CD4-positive, alpha-beta T cell (primary cell): ENCODE measurements at regions of chr1 and their contacts with region 1.

Region 1: DNA sequence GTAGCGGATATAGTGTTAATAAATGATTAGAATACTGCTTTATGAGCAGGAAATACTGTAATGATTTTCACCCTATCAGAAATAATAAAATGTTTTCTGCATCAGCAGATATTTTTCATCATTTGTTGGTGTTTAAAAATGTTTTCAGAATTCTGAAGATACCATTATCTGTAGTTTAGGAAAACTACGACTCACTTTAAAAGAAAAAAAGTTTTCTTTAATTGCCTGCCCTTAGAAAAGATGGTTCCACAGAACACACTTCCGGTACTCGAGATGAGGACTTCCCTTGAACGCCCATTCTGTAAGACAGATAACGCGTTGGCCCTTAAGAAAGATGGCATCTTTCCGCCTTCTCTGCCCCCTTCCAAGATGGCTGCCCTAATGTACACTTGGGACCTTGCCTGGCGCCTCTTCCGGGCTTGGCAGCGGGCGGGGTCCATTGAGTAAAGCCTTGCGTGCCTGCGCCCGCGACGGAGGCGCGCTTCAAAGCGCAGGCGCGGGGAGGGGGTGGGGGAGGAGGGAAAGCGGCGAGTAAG is at the start of gene SZRD1:
- DNase-seq: peak; percentile 90 to 99 (median 94)
- ATAC-seq: peak; percentile 89
- H3K4me3 ChIP-seq: peak within 1 kb of the TSS; percentile 100
- H3K4me3 Mint-ChIP-seq: peak within 1 kb of the TSS; percentile 98
- H3K27ac ChIP-seq: peak within 1 kb of the TSS; percentile 99 to 100
- H3K27ac Mint-ChIP-seq: peak within 1 kb of the TSS; percentile 99
- H3K4me1 ChIP-seq: peaks cover 38% of the 10 kb centered on the region
- H3K4me1 Mint-ChIP-seq: peaks cover 42% of the 10 kb centered on the region
- H3K27me3 ChIP-seq: no peaks in the 10 kb centered on the region
- H3K27me3 Mint-ChIP-seq: no peaks in the 10 kb centered on the region
- CTCF ChIP-seq: no peak
- total RNA-seq, gene SZRD1: 115 to 120 TPM

Region 2: GRCh38 chr1:15975805-15976680 is 390.7 kb before region 1 on chr1 and contains the start of gene ZBTB17:
- CTCF ChIA-PET with region 1: no interaction called
- POLR2A ChIA-PET with region 1: no interaction called
- intact Hi-C with region 1: loop called in 1 of 2 experiments (anchors 2 kb)
- DNase-seq: peak; percentile 91 to 99 (median 94)
- ATAC-seq: peak; percentile 92
- H3K4me3 ChIP-seq: peak within 1 kb of the TSS; percentile 91
- H3K4me3 Mint-ChIP-seq: peak within 1 kb of the TSS; percentile 99
- H3K27ac ChIP-seq: peak within 1 kb of the TSS; percentile 67 to 70
- H3K27ac Mint-ChIP-seq: peak within 1 kb of the TSS; percentile 92
- H3K4me1 ChIP-seq: peaks cover 37% of the 10 kb centered on the region
- H3K4me1 Mint-ChIP-seq: peaks cover 34% of the 10 kb centered on the region
- H3K27me3 ChIP-seq: no peaks in the 10 kb centered on the region
- H3K27me3 Mint-ChIP-seq: no peaks in the 10 kb centered on the region
- CTCF ChIP-seq: no peak
- total RNA-seq, gene ZBTB17: 70.2 to 78.1 TPM

Region 3: DNA sequence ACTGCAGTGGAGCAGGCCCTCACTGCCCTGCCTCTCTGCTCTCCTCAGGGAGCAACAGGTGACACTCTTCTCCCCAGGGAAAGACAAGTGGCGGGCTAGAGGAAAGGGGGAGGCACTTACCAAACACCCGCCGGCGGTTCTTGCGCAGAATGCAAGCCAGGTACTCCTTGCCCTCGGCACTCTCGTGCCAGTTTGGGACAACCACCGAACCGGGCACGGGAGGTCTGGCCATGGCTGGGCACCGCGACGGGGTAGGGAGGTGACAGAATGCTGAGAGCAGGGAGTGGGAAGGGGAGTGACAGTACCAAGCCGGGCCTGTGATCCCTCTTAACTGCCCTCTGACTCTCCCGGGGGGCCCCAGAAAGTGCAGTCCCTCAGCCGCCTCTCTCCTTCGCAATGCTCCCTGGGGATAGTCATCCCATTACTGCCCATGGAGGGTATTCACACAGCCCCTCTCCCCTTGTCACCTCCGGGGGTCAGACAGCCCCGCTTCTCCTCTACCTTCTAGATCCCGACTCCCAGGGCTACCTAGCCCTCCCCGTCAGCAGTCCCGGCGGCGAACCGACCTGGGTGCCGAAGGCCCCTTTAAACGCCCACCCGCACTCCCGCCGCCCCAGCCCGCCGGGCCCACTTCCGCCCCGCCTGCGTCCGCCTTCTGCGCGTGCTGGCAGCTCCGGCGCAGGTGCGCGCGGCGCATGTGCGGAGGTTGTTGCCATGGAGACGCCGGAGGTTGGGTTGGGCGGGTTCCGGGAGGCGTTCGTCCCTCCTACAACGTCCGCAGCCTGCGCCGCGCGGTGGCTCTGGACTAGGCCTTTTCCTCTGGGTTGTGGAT is 130.1 kb before region 1 on chr1 and contains the start of gene CPLANE2:
- CTCF ChIA-PET with region 1: interaction called, 3 read pairs
- POLR2A ChIA-PET with region 1: no interaction called
- intact Hi-C with region 1: loop called (anchors 2 to 10 kb)
- DNase-seq: peak; percentile 93 to 98 (median 95)
- ATAC-seq: peak; percentile 78
- H3K4me3 ChIP-seq: peak within 1 kb of the TSS; percentile 85
- H3K4me3 Mint-ChIP-seq: peak within 1 kb of the TSS; percentile 93
- H3K27ac ChIP-seq: peak within 1 kb of the TSS; percentile 66 to 84
- H3K27ac Mint-ChIP-seq: peak within 1 kb of the TSS; percentile 84
- H3K4me1 ChIP-seq: peaks cover 23% of the 10 kb centered on the region
- H3K4me1 Mint-ChIP-seq: peaks cover 22% of the 10 kb centered on the region
- H3K27me3 ChIP-seq: no peaks in the 10 kb centered on the region
- H3K27me3 Mint-ChIP-seq: no peaks in the 10 kb centered on the region
- CTCF ChIP-seq: peak; percentile 11
- total RNA-seq, gene CPLANE2: 5.3 to 8.4 TPM

Region 4: DNA sequence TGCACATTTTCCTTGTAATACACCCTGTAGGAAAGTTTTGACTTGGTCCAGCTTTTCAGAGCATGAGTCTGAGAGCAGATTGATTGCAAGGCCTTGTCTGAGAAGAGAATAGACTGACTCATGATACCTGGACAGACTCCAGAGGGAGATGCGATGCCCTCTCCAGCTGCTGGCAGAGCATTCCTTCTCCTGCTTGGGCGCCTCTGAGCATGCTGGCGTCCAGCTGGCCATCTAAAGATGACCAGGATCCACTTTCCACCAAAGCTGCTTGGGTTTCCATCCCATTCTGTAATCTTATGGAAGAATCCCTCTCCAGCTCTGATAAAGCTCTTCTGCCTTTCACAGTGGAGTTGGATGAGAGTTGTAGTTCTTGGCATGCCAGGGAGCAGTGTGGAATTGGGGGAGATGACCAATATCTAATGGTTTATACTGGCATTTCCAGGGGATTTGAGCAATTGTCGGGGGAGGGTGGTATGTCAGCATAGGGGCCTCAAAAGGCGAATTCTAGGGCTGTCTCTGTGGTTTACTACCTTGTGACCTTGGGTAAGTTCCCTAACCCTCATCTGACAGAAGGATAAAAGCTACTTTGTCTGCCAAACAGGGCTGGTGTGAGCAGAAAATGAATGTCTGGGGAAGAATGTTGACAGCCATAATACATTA is 19.8 kb after region 1 on chr1:
- CTCF ChIA-PET with region 1: interaction called, 3 read pairs
- POLR2A ChIA-PET with region 1: interaction called, 24 read pairs
- intact Hi-C with region 1: no loop called
- DNase-seq: peak in 2 of 14 experiments; percentile 35 to 39
- ATAC-seq: peak; percentile 60
- H3K4me3 ChIP-seq: peak overlapping the region; percentile 35
- H3K4me3 Mint-ChIP-seq: peak overlapping the region; percentile 54
- H3K27ac ChIP-seq: peak overlapping the region; percentile 28 to 48
- H3K27ac Mint-ChIP-seq: peak overlapping the region; percentile 82
- H3K4me1 ChIP-seq: peaks cover 83% of the 10 kb centered on the region
- H3K4me1 Mint-ChIP-seq: peaks cover 68% of the 10 kb centered on the region
- H3K27me3 ChIP-seq: no peaks in the 10 kb centered on the region
- H3K27me3 Mint-ChIP-seq: no peaks in the 10 kb centered on the region
- CTCF ChIP-seq: no peak

Region 5: DNA sequence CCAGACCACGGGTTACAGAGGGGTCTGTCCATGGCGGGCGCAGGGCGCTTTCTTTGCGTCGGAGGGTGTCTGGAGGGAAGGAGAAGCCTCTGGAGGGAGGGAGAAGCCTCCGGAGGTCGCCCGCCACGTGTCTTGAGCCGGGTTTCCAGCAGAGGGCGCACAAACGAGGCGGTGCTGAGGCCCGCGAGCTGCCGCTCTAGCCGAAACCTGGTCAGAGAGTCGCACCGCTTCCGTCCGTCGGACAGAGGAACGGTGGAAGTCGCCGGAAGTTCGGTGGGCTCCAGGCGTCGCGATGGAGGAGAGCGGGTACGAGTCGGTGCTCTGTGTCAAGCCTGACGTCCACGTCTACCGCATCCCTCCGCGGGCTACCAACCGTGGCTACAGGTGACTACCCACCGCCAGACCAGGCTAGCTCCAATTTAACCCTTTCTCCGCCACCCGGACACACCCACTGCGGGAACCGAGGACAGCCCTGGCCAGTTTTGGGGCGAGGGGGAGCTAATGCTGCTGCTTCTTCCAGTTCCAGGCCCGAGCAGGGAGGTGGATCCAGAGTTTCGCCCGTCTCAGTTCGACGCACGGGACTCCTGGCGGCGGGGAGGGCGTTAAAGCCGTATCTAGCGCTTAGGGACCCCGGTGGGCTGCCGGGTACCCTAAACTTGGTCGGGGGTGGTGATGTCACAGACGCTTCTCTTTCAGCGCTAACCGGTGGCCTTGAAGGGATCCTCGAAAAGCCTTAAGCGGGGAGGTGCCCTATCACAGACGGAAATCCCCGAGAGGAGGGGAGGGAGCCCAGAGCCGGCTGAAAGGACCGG is 73.9 kb after region 1 on chr1 and contains the start of gene NECAP2:
- CTCF ChIA-PET with region 1: interaction called, 5 read pairs
- POLR2A ChIA-PET with region 1: interaction called, 26 read pairs
- intact Hi-C with region 1: loop called (anchors 2 kb)
- DNase-seq: peak; percentile 86 to 96 (median 93)
- ATAC-seq: peak; percentile 80
- H3K4me3 ChIP-seq: peak within 1 kb of the TSS; percentile 82
- H3K4me3 Mint-ChIP-seq: peak within 1 kb of the TSS; percentile 99
- H3K27ac ChIP-seq: peak within 1 kb of the TSS; percentile 98 to 100
- H3K27ac Mint-ChIP-seq: peak within 1 kb of the TSS; percentile 97
- H3K4me1 ChIP-seq: peaks cover 45% of the 10 kb centered on the region
- H3K4me1 Mint-ChIP-seq: peaks cover 33% of the 10 kb centered on the region
- H3K27me3 ChIP-seq: no peaks in the 10 kb centered on the region
- H3K27me3 Mint-ChIP-seq: no peaks in the 10 kb centered on the region
- CTCF ChIP-seq: peak; percentile 84
- total RNA-seq, gene NECAP2: 65.8 to 66.0 TPM

Region 6: GRCh38 chr1:16613185-16614147 is 246.7 kb after region 1 on chr1 and contains the start of gene NBPF1:
- CTCF ChIA-PET with region 1: no interaction called
- POLR2A ChIA-PET with region 1: interaction called, 4 read pairs
- intact Hi-C with region 1: loop called in 1 of 2 experiments (anchors 10 kb)
- DNase-seq: peak; percentile 76 to 97 (median 87)
- ATAC-seq: peak; percentile 94
- H3K4me3 ChIP-seq: peak within 1 kb of the TSS; percentile 63
- H3K4me3 Mint-ChIP-seq: no peak within 1 kb of the TSS
- H3K27ac ChIP-seq: peak within 1 kb of the TSS in 1 of 2 donors; percentile 11
- H3K27ac Mint-ChIP-seq: no peak within 1 kb of the TSS
- H3K4me1 ChIP-seq: peaks cover 22% of the 10 kb centered on the region
- H3K4me1 Mint-ChIP-seq: no peaks in the 10 kb centered on the region
- H3K27me3 ChIP-seq: peaks cover 2 to 9% of the 10 kb centered on the region in 2 experiments
- H3K27me3 Mint-ChIP-seq: no peaks in the 10 kb centered on the region
- CTCF ChIP-seq: no peak
- total RNA-seq, gene NBPF1: 15.0 to 15.9 TPM